GM13976 (cell line): ENCODE measurements at regions of chr17 and their contacts with region 1.

Region 1: DNA sequence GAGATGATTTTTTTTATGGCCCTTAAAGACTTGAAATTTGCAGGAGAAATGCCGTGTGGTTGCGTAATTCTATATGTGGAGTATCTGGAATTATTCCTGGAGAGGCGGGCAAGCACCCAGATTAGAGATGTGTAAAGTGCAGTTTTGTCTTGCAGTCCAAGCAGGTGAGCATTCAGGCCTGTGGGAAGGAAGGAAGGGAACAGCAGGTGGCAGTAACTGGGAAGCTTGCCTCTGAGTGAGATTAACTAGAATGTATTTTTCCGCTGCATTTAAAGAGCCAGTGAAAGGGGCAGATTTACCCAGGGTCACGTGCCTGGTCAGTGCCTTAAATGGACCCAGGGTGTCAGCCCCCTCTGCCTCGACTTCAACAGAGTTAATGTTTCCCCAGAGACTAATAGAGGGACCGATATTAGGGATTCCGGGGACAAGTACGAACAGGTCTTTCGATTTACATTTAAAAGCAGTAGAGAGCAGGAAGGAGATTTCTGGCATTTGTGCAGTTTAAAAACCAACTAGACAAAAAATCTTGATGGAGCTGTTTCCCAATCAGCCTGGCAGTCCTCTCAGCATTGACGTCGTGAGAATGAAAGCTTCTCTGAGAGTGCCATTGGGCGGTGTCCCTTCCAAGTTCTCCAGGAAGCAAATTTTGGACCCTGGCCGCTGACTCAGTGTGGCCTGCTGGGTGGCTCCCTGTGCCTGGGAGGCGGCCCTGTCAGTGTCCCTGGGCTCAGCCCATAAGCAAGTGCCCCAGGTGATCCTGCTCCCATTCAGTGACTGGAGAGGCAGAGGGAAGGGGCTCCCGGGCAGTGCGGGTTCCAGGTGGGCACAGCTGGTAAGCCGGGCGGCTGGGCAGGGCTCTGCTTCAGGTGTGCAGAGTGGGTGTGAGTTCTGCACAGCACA is 38.2 kb downstream of the KSR1 start:
- DNase-seq: no peak
- CTCF ChIP-seq: no peak

Region 2: DNA sequence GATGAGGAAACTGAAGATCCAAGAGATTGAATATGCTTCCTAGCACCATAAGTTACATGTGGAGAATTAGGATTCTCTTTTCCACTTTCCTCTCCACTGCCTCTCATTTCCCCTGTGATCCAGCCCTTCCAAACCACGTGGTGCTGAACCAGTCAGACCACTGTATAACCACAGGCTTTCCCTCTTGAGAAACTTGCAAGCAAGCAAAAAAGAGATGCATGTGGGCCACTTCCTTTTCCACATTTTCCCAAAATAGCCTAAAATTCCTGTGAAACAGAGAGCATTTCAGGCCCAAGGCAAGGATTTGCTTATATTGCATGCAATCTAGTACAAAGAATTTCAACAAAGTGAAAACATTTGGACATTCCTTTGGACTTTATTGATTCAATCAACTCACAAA is 97.5 kb before region 1 on chr17:
- in situ Hi-C with region 1: loop called (anchors 10 kb)
- DNase-seq: no peak
- CTCF ChIP-seq: no peak

Region 3: GRCh38 chr17:27559506-27560481 is 65.4 kb after region 1 on chr17:
- in situ Hi-C with region 1: loop called (anchors 10 kb)
- DNase-seq: no peak
- CTCF ChIP-seq: no peak